Activated CD4-positive, alpha-beta T cell treated with anti-CD3 and anti-CD28 coated beads, Interleukin-2, amount 10 ng/mL, durations not matched to agents 24 days and 14 days (primary cell): ENCODE measurements at regions of chr17 and their contacts with region 1.

Region 1: DNA sequence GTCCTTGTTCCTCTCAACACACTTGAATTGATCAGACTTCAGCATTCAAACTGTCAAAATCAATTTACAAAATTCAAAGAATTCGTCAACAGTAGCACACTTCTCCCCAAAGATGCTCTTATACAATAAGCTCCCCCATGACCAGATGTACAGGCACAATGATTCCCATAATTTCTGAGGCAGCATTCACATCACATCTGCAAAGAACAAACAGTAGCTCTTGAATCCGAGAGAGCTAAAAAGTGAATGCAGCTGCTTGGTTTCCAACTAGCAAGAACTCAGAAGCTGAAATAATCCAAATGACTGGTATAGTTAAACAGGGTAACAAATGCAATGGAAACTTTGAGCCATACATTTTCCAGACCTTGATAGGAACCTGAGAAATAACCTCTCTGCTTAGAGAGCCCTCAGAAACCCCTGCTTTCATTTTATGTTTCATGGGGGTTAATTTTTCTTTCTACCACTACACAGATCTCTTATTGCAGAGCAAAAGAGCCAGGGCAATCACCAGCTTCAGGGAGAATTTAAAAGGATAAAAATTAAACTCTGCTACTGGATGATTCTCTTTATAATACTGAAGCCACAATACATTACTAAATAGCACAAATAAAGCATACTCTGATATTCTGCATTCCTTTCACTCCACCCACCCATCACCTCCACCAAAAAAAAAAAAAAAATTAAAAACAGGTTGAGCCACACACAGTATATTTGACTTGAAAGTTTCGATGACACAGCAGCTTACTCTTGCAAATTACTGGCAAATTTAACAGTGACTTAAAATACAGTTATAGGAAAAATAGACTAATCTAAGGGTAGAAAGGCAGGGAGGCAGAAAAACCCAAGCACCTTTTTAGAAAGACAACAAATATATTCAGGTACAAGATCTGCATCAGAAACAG is 23.1 kb upstream of the TMEM97 start:
- DNase-seq: no peak
- H3K4me3 Mint-ChIP-seq: peak overlapping the region; percentile 13
- H3K27ac Mint-ChIP-seq: peak overlapping the region; percentile 83
- H3K4me1 Mint-ChIP-seq: peaks cover 13% of the 10 kb centered on the region
- H3K27me3 Mint-ChIP-seq: peaks cover 23% of the 10 kb centered on the region

Region 2: DNA sequence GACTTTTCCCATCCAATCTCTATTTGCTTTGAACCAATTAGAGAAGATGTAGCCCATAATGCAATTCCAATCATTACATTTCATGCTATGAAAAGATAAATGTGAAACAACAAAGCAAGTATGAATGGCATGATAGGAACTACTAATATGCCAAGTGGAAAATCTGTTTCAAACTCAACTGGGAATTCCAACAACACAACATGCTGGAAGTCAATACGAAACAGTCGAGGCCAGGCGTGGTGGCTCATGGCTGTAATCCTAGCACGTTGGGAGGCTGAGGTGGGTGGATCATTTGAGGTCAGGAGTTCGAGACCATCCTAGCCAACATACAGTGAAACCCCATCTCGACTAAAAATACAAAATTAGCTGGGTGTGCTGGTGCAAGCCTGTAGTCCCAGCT is 16.5 kb before region 1 on chr17:
- intact Hi-C with region 1: loop called (anchors 2 kb)
- DNase-seq: no peak
- H3K4me3 Mint-ChIP-seq: no peak overlapping the region
- H3K27ac Mint-ChIP-seq: no peak overlapping the region
- H3K4me1 Mint-ChIP-seq: peaks cover 11% of the 10 kb centered on the region
- H3K27me3 Mint-ChIP-seq: peaks cover 69% of the 10 kb centered on the region